HEK293 (cell line): ENCODE measurements at regions of chr6 and their contacts with region 1.

Region 1: DNA sequence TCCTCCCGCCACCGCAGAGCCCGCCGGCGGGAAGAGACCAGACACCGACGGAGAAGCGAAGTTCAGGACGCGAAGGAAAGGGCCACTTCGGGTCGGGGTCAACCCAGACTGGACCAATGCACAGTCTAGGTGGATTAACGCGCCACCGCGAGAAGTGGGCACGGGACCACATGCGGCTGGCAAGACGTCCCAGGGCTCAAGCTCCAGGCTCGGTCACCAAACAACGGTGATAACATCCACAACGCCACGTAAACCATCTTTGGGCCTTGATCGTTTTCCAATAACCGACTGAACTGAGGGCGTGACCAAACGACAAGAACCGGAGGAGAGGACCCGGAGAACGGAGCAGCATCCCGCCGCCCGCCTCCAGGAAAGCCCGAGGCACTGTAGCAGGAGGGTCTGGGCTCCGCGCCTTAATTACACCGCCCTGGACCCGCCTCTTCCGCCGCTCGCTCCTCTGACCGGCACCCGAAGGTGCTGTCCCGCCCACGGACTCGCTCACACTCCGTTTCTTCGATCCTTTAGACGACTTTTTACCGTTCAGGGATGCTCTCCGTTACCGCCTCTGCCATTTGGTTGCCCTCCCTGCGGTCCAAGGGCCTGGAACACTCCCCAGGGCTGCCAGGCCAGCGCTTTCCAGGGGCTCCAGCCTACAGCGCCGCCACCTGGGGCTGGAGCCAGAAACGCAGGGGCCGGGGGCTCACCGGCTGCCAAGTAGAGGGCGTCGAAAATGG is 44.1 kb downstream of the DPPA5 start:
- H3K4me3 ChIP-seq: peak overlapping the region; percentile 53
- H3K27ac ChIP-seq: peak overlapping the region; percentile 78
- H3K4me1 ChIP-seq: no peaks in the 10 kb centered on the region
- CTCF ChIP-seq: peak; percentile 96

Region 2: GRCh38 chr6:72689107-72689954 is 620.6 kb before region 1 on chr6:
- CTCF ChIA-PET with region 1: no interaction called
- POLR2A ChIA-PET with region 1: no interaction called
- H3K4me3 ChIP-seq: no peak overlapping the region
- H3K27ac ChIP-seq: no peak overlapping the region
- H3K4me1 ChIP-seq: no peaks in the 10 kb centered on the region
- CTCF ChIP-seq: no peak

Region 3: DNA sequence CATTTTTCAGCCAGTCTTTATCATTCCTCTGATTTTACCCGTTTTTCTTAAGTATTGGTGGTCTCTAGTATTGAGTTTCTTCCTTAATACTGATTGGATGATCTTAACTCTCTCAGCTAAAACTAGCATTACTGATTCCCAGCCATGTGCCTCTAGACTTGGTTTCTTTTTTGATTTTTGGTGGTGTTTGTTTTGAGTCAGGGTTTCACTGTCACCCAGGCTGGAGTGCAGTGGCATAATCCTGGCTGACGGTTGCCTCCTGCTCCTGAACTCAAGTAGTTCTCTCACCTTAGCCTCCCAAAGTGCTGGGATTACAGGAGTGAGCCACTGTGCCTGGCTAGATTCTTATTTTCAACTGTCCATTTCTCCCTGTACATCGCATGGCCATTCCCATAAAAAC is 19.3 kb after region 1 on chr6:
- CTCF ChIA-PET with region 1: interaction called, 12 read pairs
- POLR2A ChIA-PET with region 1: interaction called, 3 read pairs
- H3K4me3 ChIP-seq: no peak overlapping the region
- H3K27ac ChIP-seq: no peak overlapping the region
- H3K4me1 ChIP-seq: no peaks in the 10 kb centered on the region
- CTCF ChIP-seq: no peak